ENCODE measurements at regions of chr10 and their contacts with region 1.

Region 1: DNA sequence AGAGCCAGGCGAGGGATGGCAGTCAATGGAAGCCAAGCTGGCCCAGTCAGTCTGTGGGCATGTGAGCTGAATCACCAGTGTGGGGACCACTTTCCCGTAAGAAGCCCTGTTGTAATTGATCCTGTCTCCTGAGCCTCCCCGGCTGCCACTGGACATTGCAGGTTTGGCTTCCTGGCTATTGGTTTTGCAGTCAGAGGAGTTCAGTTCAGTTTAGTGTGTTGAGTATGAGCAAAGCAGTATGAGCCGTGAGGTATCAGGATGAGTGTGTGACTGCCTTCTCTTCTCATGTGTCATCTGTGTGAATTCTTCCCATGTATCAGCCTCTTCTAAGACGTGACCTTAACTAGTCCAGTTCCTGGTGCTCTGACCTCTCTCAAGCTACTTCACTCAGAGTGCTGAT is 227.4 kb downstream of the PRKG1 start:
- DNase-seq: peak in 1 of 2 donors; percentile 73
- ATAC-seq: peak; percentile 54
- H3K4me3 ChIP-seq: no peak overlapping the region
- H3K27ac ChIP-seq: peak overlapping the region; percentile 85 to 100
- H3K4me1 ChIP-seq: peaks cover 7 to 16% of the 10 kb centered on the region in 2 donors
- H3K27me3 ChIP-seq: no peaks in the 10 kb centered on the region

Region 2: DNA sequence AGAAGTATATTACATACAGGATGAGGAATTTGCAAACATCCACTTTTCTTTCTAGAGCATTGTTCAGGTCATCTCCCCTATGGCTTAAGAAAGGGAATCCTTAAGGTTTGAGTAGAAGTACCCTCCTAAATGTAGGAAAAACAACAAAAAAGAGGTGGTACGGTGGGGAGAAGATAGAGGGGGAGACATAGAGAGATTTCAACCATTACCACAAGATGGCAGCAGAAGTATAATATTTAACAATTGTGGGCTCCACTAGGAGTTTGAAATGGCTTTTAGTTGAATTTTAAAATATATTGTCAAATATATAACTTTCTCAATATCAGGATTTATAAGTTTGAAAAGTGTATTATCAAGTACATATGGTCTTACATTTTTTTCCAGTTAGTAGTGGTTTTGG is 300.1 kb before region 1 on chr10:
- intact Hi-C with region 1: loop called in 1 of 2 experiments (anchors 1 kb)
- DNase-seq: no peak
- ATAC-seq: peak; percentile 62
- H3K4me3 ChIP-seq: no peak overlapping the region
- H3K27ac ChIP-seq: peak overlapping the region in 1 of 2 donors; percentile 67
- H3K4me1 ChIP-seq: peaks cover 4 to 7% of the 10 kb centered on the region in 2 donors
- H3K27me3 ChIP-seq: no peaks in the 10 kb centered on the region

Region 3: GRCh38 chr10:51257511-51258248 is 44.0 kb before region 1 on chr10:
- intact Hi-C with region 1: loop called in 1 of 2 experiments (anchors 5 kb)
- DNase-seq: no peak
- ATAC-seq: peak; percentile 73
- H3K4me3 ChIP-seq: no peak overlapping the region
- H3K27ac ChIP-seq: peak overlapping the region; percentile 68 to 97
- H3K4me1 ChIP-seq: peaks cover 3 to 6% of the 10 kb centered on the region in 2 donors
- H3K27me3 ChIP-seq: no peaks in the 10 kb centered on the region

Region 4: GRCh38 chr10:51377932-51378599 is 76.4 kb after region 1 on chr10:
- intact Hi-C with region 1: no loop called
- DNase-seq: no peak
- ATAC-seq: no peak
- H3K4me3 ChIP-seq: no peak overlapping the region
- H3K27ac ChIP-seq: no peak overlapping the region
- H3K4me1 ChIP-seq: peaks cover 5 to 6% of the 10 kb centered on the region in 2 donors
- H3K27me3 ChIP-seq: no peaks in the 10 kb centered on the region

Region 5: GRCh38 chr10:51422311-51423120 is 120.9 kb after region 1 on chr10:
- intact Hi-C with region 1: loop called in 1 of 2 experiments (anchors 10 kb)
- DNase-seq: peak; percentile 58 to 77
- ATAC-seq: peak; percentile 78
- H3K4me3 ChIP-seq: no peak overlapping the region
- H3K27ac ChIP-seq: peak overlapping the region; percentile 16 to 85
- H3K4me1 ChIP-seq: peaks cover 9 to 23% of the 10 kb centered on the region in 2 donors
- H3K27me3 ChIP-seq: no peaks in the 10 kb centered on the region

Region 6: DNA sequence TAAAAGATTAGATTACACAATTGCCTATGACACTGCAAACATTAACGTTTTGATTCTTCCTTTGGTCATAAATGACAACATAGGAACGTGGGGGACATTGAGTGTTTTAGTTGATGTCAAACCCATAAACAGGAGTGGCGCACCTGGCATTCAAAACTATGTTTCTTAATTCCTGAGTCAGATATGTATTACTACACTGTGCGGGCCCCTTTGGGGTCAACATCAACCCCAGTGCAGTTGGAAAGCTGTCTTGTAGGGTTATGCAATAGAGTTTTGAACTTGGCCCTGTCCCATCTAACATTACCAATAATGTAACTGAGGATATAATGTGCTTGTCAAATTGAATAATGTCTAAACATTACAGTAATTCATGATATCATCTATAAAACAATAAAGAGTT is 241.2 kb after region 1 on chr10:
- intact Hi-C with region 1: no loop called
- DNase-seq: no peak
- ATAC-seq: no peak
- H3K4me3 ChIP-seq: no peak overlapping the region
- H3K27ac ChIP-seq: no peak overlapping the region
- H3K4me1 ChIP-seq: peaks cover 0 to 3% of the 10 kb centered on the region in 2 donors
- H3K27me3 ChIP-seq: no peaks in the 10 kb centered on the region

Region 7: GRCh38 chr10:51574248-51575048 is 272.8 kb after region 1 on chr10:
- intact Hi-C with region 1: no loop called
- DNase-seq: no peak
- ATAC-seq: no peak
- H3K4me3 ChIP-seq: no peak overlapping the region
- H3K27ac ChIP-seq: no peak overlapping the region
- H3K4me1 ChIP-seq: no peaks in the 10 kb centered on the region
- H3K27me3 ChIP-seq: no peaks in the 10 kb centered on the region

Region 8: GRCh38 chr10:51667678-51668335 is 366.2 kb after region 1 on chr10:
- intact Hi-C with region 1: no loop called
- DNase-seq: no peak
- ATAC-seq: no peak
- H3K4me3 ChIP-seq: no peak overlapping the region
- H3K27ac ChIP-seq: peak overlapping the region in 1 of 2 donors; percentile 30
- H3K4me1 ChIP-seq: peaks cover 0 to 5% of the 10 kb centered on the region in 2 donors
- H3K27me3 ChIP-seq: no peaks in the 10 kb centered on the region

Measured in aorta (tissue), 5 donors.